OCI-LY7 (cell line): ENCODE measurements at regions of chr14 and their contacts with region 1.

Region 1: DNA sequence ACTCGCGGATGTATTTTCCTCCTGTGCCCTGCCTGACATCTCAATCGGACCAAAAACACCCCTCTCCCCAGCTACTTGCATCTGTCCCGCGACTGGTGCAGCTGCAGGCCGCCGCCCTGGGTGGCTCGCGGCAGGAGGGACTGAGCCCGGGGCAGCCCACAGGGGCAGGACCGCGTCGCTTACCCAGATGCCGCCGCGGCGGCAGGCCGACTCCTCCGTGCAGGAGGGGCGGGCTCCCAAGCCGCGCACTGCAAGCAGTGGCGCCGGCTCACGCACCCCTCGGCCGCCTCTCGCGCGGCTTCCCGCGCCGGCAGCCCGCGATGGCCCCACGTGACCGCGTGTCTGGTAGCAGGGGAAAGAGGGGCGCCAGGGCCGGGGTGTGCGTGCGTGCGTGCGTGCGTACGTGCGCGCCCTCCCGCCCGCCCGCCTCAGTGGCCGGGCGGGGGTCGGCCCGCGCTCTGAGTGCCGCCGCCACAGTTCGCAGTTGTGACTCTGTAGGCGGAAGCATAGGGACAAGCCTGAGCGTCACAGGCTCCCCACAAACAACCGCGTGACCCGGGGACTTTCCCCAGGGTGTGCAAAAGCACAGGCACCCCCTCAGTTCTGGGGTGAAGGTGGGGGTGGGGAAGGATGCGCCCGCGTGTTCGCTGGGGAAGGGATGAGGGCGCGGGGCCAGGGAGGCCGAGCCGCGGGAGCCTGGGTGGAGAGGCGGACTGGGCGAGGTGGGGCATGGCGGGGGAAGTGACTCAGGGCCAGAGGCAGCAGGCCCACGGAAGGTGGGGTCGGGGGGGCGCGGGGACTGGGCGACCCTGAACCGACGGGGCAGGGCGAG is at the start of gene ZBTB25:
- DNase-seq: peak; percentile 92
- H3K4me3 ChIP-seq: peak within 1 kb of the TSS; percentile 87
- H3K27ac ChIP-seq: peak within 1 kb of the TSS; percentile 96
- H3K4me1 ChIP-seq: peaks cover 55% of the 10 kb centered on the region
- CTCF ChIP-seq: no peak
- total RNA-seq, gene ZBTB25: 16.1 and 18.4 TPM in 2 replicates

Region 2: DNA sequence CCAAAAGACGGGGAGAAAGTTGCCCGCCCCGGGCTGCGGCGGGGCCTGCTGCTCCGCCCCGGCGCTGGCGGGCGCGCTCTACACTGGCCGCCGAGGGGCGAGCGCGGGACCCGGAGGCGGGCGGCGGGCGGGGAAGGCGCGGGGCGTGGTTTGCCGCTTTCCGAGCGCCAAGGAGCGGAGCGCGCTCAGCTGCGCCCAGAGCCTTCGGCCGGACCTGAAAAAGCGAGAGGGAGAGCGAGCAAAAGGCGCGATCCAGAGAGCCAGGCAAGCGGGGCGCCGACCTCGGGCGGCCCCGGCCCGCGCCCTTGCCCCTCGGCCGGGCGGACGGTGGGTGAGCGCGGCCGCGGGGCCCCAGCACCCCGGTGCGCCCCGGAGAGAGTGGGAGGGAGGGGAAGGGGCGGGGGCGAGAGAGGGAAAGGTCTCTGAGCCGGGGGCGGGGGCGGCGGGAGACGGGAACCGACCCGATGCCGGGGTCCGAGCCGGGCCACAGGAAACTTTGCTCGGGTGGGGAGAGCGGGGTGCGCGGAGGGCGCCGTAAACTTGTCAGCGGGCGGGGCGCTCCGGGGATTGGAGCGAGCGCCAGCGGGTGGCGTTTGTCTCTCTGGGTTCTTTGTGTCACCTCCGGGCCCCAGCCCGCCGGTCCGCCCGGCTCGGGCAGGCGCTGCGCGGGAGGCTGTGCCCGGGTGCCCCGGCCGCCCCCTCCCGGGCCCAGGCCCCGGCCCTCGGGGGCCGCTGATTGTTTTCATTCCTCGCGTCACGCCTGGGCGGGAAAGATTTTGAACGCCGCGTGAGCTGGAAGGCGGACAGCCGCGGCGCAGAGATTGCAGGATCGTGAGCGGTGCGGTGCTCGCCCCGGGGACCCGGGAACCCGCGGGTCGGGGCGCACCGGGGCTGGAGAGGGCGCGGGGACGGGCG is 650.6 kb before region 1 on chr14 and contains the start of gene SYNE2:
- CTCF ChIA-PET with region 1: no interaction called
- POLR2A ChIA-PET with region 1: no interaction called
- intact Hi-C with region 1: loop called (anchors 5 kb)
- DNase-seq: peak; percentile 91
- H3K4me3 ChIP-seq: peak within 1 kb of the TSS; percentile 92
- H3K27ac ChIP-seq: peak within 1 kb of the TSS; percentile 83
- H3K4me1 ChIP-seq: peaks cover 37% of the 10 kb centered on the region
- CTCF ChIP-seq: peak; percentile 56
- total RNA-seq, gene SYNE2: 131 and 150 TPM in 2 replicates

Region 3: DNA sequence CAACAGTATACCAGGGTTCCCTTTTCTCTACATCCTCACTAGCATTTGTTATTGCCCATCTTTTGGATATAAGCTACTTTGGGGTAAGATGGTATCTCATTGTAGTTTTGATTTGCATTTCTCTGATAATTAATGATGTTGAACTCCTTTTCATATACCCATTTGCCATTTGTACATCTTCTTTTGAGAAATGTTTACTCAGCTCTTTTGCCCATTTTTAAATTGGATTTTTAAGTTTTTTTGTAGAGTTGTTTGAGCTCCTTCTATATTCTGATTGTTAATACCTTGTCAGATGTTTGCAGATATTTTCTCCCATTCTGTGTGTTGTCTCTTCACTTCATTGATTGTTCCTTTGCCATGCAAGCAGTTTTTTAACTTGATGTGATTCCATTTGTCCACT is 231.7 kb before region 1 on chr14:
- CTCF ChIA-PET with region 1: no interaction called
- POLR2A ChIA-PET with region 1: no interaction called
- intact Hi-C with region 1: no loop called
- DNase-seq: no peak
- H3K4me3 ChIP-seq: no peak overlapping the region
- H3K27ac ChIP-seq: no peak overlapping the region
- H3K4me1 ChIP-seq: no peaks in the 10 kb centered on the region
- CTCF ChIP-seq: no peak

Region 4: GRCh38 chr14:64338616-64339316 is 164.9 kb before region 1 on chr14:
- CTCF ChIA-PET with region 1: no interaction called
- POLR2A ChIA-PET with region 1: interaction called, 4 read pairs
- intact Hi-C with region 1: loop called (anchors 2 kb)
- DNase-seq: peak; percentile 98
- H3K4me3 ChIP-seq: peak overlapping the region; percentile 80
- H3K27ac ChIP-seq: peak overlapping the region; percentile 76
- H3K4me1 ChIP-seq: peaks cover 21% of the 10 kb centered on the region
- CTCF ChIP-seq: no peak

Region 5: DNA sequence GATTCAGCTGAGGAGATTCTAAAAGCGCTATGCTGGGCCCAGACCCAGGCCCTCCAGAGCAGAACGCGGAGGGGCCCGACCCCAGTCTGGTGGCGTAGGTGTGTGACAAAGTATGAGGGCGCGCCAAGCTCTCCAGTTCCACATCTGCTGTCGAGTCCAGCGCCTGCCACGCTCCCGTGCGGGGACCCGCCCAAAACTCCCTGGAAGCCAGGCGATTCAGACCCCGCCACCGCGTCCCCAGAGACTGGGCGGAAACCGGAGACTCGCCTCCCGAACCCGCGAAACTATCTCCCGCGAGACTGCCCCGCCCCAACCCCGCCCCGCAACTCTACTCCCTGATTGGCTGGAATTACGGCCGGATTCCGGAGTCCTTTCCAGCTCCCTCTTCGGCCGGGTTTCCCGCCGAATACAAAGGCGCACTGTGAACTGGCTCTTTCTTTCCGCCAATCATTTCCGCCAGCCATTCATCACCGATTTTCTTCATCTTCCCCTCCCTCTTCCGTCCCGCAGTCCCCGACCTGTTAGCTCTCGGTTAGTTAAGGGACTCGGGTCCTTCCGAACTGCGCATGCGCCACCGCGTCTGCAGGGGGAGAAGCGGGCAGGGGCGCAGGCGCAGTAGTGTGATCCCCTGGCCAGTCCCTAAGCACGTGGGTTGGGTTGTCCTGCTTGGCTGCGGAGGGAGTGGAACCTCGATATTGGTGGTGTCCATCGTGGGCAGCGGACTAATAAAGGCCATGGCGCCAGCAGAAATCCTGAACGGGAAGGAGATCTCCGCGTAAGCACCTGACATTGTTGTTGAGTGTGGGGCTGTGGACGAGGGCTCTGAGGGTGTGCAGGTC is 115.8 kb before region 1 on chr14 and contains the start of gene MTHFD1:
- CTCF ChIA-PET with region 1: interaction called, 3 read pairs
- POLR2A ChIA-PET with region 1: interaction called, 12 read pairs
- intact Hi-C with region 1: loop called (anchors 2 kb)
- DNase-seq: peak; percentile 98
- H3K4me3 ChIP-seq: peak within 1 kb of the TSS; percentile 85
- H3K27ac ChIP-seq: peak within 1 kb of the TSS; percentile 78
- H3K4me1 ChIP-seq: peaks cover 26% of the 10 kb centered on the region
- CTCF ChIP-seq: no peak
- total RNA-seq, gene MTHFD1: 73.7 and 100 TPM in 2 replicates

Region 6: DNA sequence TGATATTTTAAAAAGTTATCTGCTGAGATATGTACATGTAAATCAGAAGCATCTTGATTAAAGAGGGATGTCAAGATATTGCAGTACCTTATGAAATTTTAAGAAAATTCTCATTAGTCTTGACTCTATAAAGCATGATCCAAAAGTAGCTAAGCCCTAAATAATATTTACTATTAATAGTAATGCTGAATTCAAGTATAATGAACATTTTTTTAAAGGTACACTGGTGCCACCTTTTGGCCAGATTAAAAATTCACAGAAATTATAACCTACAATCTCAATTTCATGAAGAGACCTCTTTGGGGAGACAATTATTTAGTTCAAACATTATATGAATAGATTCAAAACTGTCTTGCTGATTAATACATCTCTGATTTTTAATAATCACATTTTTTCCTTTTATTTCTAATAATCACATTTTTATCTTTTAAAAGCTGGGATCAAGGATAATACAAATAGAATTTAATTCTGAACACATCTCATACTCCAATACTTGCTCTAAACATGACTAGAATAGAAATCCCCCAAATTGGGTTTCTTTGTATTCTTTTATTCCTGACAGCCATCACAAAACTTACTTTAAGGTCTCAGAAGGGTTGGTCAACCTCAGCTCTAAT is 25.0 kb before region 1 on chr14:
- CTCF ChIA-PET with region 1: no interaction called
- POLR2A ChIA-PET with region 1: interaction called, 12 read pairs
- intact Hi-C with region 1: no loop called
- DNase-seq: peak; percentile 46
- H3K4me3 ChIP-seq: no peak overlapping the region
- H3K27ac ChIP-seq: no peak overlapping the region
- H3K4me1 ChIP-seq: no peaks in the 10 kb centered on the region
- CTCF ChIP-seq: peak; percentile 89

Region 7: DNA sequence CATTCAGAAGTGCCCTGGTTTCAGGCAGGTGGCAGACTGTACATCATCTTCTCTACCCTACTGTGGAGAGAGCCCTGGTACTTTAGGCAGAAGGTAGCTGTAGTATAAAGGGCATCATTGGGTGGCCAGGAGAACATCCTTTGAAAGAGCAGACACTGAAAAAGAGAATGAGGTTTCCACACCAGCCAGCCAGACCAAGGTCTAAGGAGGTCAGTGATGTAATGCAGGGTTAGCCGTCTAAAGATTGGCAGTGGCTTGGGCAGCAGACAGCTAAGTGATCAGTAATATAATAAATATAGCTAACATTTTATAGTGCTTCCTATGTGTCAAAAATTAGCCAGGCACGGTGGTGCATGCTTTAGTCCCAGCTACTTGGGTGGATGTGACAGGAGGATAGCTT is 12.1 kb before region 1 on chr14:
- CTCF ChIA-PET with region 1: interaction called, 3 read pairs
- POLR2A ChIA-PET with region 1: interaction called, 13 read pairs
- intact Hi-C with region 1: no loop called
- DNase-seq: no peak
- H3K4me3 ChIP-seq: no peak overlapping the region
- H3K27ac ChIP-seq: no peak overlapping the region
- H3K4me1 ChIP-seq: no peaks in the 10 kb centered on the region
- CTCF ChIP-seq: no peak